ENCODE measurements at regions of chr1 and their contacts with region 1.

Region 1: GRCh38 chr1:45569962-45570581 is 13.8 kb upstream of the NASP start:
- DNase-seq: peak; percentile 48
- ATAC-seq: peak; percentile 87
- H3K4me3 ChIP-seq: no peak overlapping the region
- H3K27ac ChIP-seq: no peak overlapping the region
- H3K4me1 ChIP-seq: no peaks in the 10 kb centered on the region
- H3K27me3 ChIP-seq: no peaks in the 10 kb centered on the region
- CTCF ChIP-seq: peak; percentile 78 to 98 (median 98)
- POLR2A ChIP-seq: no peak
- RAD21 ChIP-seq: peak; percentile 94

Region 2: GRCh38 chr1:44786138-44786840 is 783.8 kb before region 1 on chr1:
- CTCF ChIA-PET with region 1: no interaction called
- POLR2A ChIA-PET with region 1: no interaction called
- RAD21 ChIA-PET with region 1: no interaction called
- intact Hi-C with region 1: loop called (anchors 5 kb)
- DNase-seq: peak; percentile 45
- ATAC-seq: peak; percentile 80
- H3K4me3 ChIP-seq: peak overlapping the region; percentile 35 to 51
- H3K27ac ChIP-seq: peak overlapping the region; percentile 52
- H3K4me1 ChIP-seq: peaks cover 6 to 24% of the 10 kb centered on the region in 2 experiments
- H3K27me3 ChIP-seq: no peaks in the 10 kb centered on the region
- CTCF ChIP-seq: peak; percentile 80 to 99 (median 99)
- POLR2A ChIP-seq: no peak
- RAD21 ChIP-seq: peak; percentile 93

Region 3: GRCh38 chr1:45303582-45304310 is 266.3 kb before region 1 on chr1:
- CTCF ChIA-PET with region 1: interaction called, 6 read pairs
- POLR2A ChIA-PET with region 1: no interaction called
- RAD21 ChIA-PET with region 1: no interaction called
- intact Hi-C with region 1: loop called (anchors 5 kb)
- DNase-seq: peak; percentile 94
- ATAC-seq: peak; percentile 89
- H3K4me3 ChIP-seq: peak overlapping the region; percentile 69 to 70
- H3K27ac ChIP-seq: peak overlapping the region; percentile 82
- H3K4me1 ChIP-seq: peaks cover 12 to 41% of the 10 kb centered on the region in 2 experiments
- H3K27me3 ChIP-seq: no peaks in the 10 kb centered on the region
- CTCF ChIP-seq: peak; percentile 52 to 95 (median 58)
- POLR2A ChIP-seq: peak; percentile 61
- RAD21 ChIP-seq: peak; percentile 83

Region 4: DNA sequence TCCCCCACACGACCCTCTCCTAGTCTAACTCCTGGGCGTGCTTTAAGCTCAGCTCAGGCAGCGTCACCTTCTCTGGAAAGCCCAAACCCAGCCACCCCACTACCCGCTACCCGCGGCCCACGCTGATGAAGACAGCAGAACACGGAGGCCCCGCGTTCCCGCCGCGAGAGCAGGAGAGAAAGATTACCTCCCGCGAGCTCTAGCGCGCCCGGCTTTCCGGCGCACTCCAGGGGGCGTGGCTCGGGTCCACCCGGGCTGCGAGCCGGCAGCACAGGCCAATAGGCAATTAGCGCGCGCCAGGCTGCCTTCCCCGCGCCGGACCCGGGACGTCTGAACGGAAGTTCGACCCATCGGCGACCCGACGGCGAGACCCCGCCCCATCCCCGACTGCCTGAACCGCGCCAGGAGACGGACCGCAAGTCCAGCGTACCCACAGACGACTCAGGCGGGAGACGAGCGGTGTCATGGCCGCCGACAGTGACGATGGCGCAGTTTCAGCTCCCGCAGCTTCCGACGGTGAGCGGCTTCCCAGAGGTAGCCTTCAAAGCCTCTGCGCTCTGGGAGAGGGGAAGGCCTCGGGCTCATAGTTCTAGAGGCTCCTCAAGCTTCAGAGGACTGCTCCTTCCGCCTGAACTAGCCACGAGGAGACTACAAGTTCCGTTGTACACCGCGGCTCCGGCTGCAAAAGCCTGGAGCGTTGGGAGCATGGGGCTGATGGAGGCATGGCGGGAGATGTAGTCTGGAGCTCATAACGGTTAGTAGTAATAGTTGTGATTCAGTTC is 230.1 kb before region 1 on chr1 and contains the starts of genes MUTYH and TOE1:
- CTCF ChIA-PET with region 1: no interaction called
- POLR2A ChIA-PET with region 1: no interaction called
- RAD21 ChIA-PET with region 1: no interaction called
- intact Hi-C with region 1: loop called (anchors 5 kb)
- DNase-seq: peak; percentile 79
- ATAC-seq: peak; percentile 90
- H3K4me3 ChIP-seq: peak within 1 kb of the TSS; percentile 93 to 94
- H3K27ac ChIP-seq: peak within 1 kb of the TSS; percentile 82
- H3K4me1 ChIP-seq: peaks cover 21 to 50% of the 10 kb centered on the region in 2 experiments
- H3K27me3 ChIP-seq: no peaks in the 10 kb centered on the region
- CTCF ChIP-seq: no peak
- POLR2A ChIP-seq: peak; percentile 46
- RAD21 ChIP-seq: no peak
- total RNA-seq, gene MUTYH: 44.8 TPM
- total RNA-seq, gene TOE1: 11.5 TPM

Region 5: GRCh38 chr1:45359882-45360513 is 210.1 kb before region 1 on chr1:
- CTCF ChIA-PET with region 1: no interaction called
- POLR2A ChIA-PET with region 1: no interaction called
- RAD21 ChIA-PET with region 1: no interaction called
- intact Hi-C with region 1: loop called (anchors 1 kb)
- DNase-seq: no peak
- ATAC-seq: peak; percentile 70
- H3K4me3 ChIP-seq: no peak overlapping the region
- H3K27ac ChIP-seq: no peak overlapping the region
- H3K4me1 ChIP-seq: peaks cover 13 to 20% of the 10 kb centered on the region in 2 experiments
- H3K27me3 ChIP-seq: no peaks in the 10 kb centered on the region
- CTCF ChIP-seq: peak; percentile 60 to 76 (median 64)
- POLR2A ChIP-seq: no peak
- RAD21 ChIP-seq: peak; percentile 85

Region 6: DNA sequence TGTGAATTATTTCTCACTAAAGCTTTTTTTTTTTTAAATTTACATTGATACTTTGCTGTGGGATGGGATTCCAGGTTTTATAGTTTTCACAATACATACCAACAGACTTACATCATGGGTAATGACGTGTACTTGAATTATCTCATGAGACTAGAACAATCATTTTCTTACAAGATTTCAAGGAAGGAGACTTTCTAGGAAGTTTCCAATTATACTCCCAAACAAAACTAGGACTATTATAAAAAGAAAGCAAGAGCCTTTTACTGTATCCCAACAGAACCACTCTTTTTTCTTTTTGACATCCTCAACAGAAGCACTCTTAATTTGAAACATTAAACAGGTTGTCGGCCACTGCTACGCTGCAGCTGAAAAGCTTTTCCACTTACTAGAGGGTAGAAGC is 127.8 kb before region 1 on chr1:
- CTCF ChIA-PET with region 1: no interaction called
- POLR2A ChIA-PET with region 1: no interaction called
- RAD21 ChIA-PET with region 1: no interaction called
- intact Hi-C with region 1: no loop called
- DNase-seq: no peak
- ATAC-seq: no peak
- H3K4me3 ChIP-seq: no peak overlapping the region
- H3K27ac ChIP-seq: no peak overlapping the region
- H3K4me1 ChIP-seq: no peaks in the 10 kb centered on the region
- H3K27me3 ChIP-seq: no peaks in the 10 kb centered on the region
- CTCF ChIP-seq: no peak
- POLR2A ChIP-seq: no peak
- RAD21 ChIP-seq: no peak

Region 7: DNA sequence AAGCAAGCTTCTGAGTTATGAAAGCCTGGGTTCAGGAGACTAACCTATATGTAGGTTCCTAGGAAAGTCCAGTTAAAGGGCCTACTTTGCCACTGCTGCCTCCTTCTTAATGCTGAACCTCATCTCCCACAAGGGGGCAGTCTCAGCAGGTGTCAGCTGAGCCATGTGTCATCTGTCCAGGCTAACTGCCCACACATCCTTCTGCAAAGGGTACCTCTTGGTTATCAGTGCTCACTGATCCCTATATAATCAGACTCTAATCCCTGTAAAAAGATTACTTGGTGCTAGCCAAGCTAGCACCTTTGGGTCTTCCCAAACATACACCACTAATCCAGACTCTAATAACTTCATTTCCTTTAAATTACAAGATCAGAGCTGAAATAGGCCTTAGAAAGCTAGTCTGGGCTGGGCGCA is 57.4 kb before region 1 on chr1:
- CTCF ChIA-PET with region 1: interaction called, 28 read pairs
- POLR2A ChIA-PET with region 1: interaction called, 3 read pairs
- RAD21 ChIA-PET with region 1: interaction called in 1 of 2 experiments, 4 read pairs
- intact Hi-C with region 1: loop called (anchors 1 kb)
- DNase-seq: peak; percentile 61
- ATAC-seq: peak; percentile 73
- H3K4me3 ChIP-seq: no peak overlapping the region
- H3K27ac ChIP-seq: no peak overlapping the region
- H3K4me1 ChIP-seq: no peaks in the 10 kb centered on the region
- H3K27me3 ChIP-seq: no peaks in the 10 kb centered on the region
- CTCF ChIP-seq: peak; percentile 63 to 83 (median 78); a peak in 5 of 6 replicates
- POLR2A ChIP-seq: no peak
- RAD21 ChIP-seq: peak; percentile 73

Region 8: DNA sequence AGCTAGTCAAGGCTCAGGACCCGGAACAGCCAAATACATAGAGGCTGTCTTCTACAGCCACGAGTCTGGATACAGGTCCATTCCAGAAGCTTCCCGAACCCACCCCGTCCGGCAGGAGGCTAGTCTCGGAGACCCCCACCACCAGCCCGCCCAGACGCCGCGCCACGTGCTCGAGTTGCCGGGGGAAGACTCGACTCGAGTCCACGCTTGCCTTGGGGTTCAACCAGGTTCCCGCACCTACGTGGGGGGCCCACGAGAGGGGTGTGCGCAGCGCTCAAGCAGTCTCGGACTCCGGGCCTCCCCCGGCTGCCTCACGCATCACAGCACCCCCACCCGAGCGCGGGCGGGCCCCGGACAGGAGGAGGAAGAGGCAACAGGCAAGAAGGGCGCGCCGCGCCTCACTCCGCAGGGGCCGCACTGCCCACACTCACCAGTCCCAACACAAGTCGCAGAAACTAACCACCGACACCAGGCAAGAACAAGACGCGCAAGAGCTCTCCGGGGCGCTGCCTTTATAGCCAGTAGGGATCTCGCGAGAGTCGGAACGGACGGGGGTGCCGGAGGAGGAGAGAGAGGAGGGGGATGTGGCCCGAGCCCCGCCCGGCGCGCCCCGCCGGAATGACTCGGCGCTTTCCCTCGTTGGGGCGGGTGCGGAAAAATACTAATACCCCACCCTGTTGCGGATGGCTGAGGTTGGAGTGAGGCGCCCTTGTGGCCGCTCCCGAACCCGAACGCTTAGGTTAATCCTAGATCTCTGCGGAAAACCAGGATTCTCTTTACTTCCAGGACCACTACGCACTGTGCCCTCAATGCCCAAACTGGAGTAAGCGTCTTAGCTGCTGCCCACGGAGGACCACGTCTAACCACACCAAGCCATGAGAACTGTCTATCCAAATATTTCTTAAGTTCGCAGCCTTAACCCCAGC is 48.4 kb before region 1 on chr1 and contains the start of gene PRDX1:
- CTCF ChIA-PET with region 1: interaction called, 3 read pairs
- POLR2A ChIA-PET with region 1: interaction called, 6 read pairs
- RAD21 ChIA-PET with region 1: interaction called in 1 of 2 experiments, 4 read pairs
- intact Hi-C with region 1: loop called (anchors 2 kb)
- DNase-seq: peak; percentile 92
- ATAC-seq: peak; percentile 83
- H3K4me3 ChIP-seq: peak within 1 kb of the TSS; percentile 96 to 100
- H3K27ac ChIP-seq: peak within 1 kb of the TSS; percentile 89
- H3K4me1 ChIP-seq: peaks cover 13 to 40% of the 10 kb centered on the region in 2 experiments; a peak in 3 of 4 replicates
- H3K27me3 ChIP-seq: no peaks in the 10 kb centered on the region
- CTCF ChIP-seq: peak in 1 of 3 experiments; percentile 8; a peak in 1 of 6 replicates
- POLR2A ChIP-seq: peak; percentile 100
- RAD21 ChIP-seq: no peak
- total RNA-seq, gene PRDX1: 1,171 TPM

Region 9: DNA sequence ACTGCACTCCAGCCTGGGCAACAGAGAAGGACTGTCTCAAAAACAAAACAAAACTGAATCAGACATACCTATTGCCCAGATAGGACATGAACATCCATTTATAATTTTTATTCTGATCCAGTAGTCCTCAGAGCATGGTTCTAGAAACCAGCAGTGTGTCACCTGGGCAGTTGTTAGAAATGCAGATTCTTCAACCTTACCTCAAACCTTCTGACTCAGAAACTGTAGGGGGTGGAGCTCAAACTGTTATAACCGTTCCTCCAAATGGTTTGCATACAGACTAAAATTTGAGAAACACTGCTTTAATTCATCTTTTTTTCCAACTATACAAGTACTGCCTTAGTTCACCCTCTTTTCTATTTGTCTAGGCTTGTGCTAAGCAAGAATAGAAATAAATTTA is 19.8 kb after region 1 on chr1:
- CTCF ChIA-PET with region 1: no interaction called
- POLR2A ChIA-PET with region 1: no interaction called
- RAD21 ChIA-PET with region 1: no interaction called
- intact Hi-C with region 1: no loop called
- DNase-seq: no peak
- ATAC-seq: no peak
- H3K4me3 ChIP-seq: no peak overlapping the region
- H3K27ac ChIP-seq: no peak overlapping the region
- H3K4me1 ChIP-seq: peaks cover 12 to 14% of the 10 kb centered on the region in 2 experiments
- H3K27me3 ChIP-seq: no peaks in the 10 kb centered on the region
- CTCF ChIP-seq: no peak
- POLR2A ChIP-seq: no peak
- RAD21 ChIP-seq: no peak

Measured in HCT116 (cell line).